Endothelial cell of umbilical vein (primary cell): ENCODE measurements at regions of chr2 and their contacts with region 1.

Region 1: GRCh38 chr2:67311536-67311935 is 85.6 kb upstream of the ETAA1 start:
- DNase-seq: peak; percentile 56
- H3K4me3 ChIP-seq: no peak overlapping the region
- H3K27ac ChIP-seq: no peak overlapping the region
- H3K4me1 ChIP-seq: no peaks in the 10 kb centered on the region
- H3K27me3 ChIP-seq: no peaks in the 10 kb centered on the region
- CTCF ChIP-seq: no peak
- POLR2A ChIP-seq: no peak

Region 2: DNA sequence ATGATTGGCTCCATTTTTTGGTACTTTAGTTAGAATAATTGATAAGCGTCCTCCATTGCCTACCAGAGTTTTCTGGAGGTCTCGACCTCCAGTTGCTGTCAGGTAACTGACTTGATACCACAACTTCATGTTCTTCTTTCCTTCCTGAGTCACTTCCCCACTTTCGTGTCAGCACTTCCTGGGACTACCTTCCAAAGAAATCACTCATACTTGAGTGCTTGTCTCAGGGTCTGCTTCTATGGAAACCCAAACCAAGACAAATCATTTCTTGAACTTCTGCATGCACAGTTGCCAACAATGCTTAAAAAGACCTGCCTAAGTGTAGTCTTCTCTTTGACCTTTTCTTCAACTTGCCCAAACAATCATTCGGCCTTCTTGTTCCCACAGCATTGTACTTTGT is 124.7 kb before region 1 on chr2:
- CTCF ChIA-PET with region 1: no interaction called
- POLR2A ChIA-PET with region 1: no interaction called
- dilution Hi-C with region 1: no loop called
- intact Hi-C with region 1: no loop called
- DNase-seq: no peak
- H3K4me3 ChIP-seq: no peak overlapping the region
- H3K27ac ChIP-seq: no peak overlapping the region
- H3K4me1 ChIP-seq: no peaks in the 10 kb centered on the region
- H3K27me3 ChIP-seq: no peaks in the 10 kb centered on the region
- CTCF ChIP-seq: no peak
- POLR2A ChIP-seq: no peak

Region 3: GRCh38 chr2:67295851-67296250 is 15.7 kb before region 1 on chr2:
- CTCF ChIA-PET with region 1: interaction called, 3 read pairs
- POLR2A ChIA-PET with region 1: no interaction called
- dilution Hi-C with region 1: no loop called
- intact Hi-C with region 1: loop called (anchors 2 kb)
- DNase-seq: no peak
- H3K4me3 ChIP-seq: no peak overlapping the region
- H3K27ac ChIP-seq: no peak overlapping the region
- H3K4me1 ChIP-seq: peaks cover 4% of the 10 kb centered on the region
- H3K27me3 ChIP-seq: no peaks in the 10 kb centered on the region
- CTCF ChIP-seq: no peak
- POLR2A ChIP-seq: no peak

Region 4: GRCh38 chr2:67374481-67374880 is 62.9 kb after region 1 on chr2:
- CTCF ChIA-PET with region 1: no interaction called
- POLR2A ChIA-PET with region 1: no interaction called
- dilution Hi-C with region 1: no loop called
- intact Hi-C with region 1: no loop called
- DNase-seq: peak; percentile 46
- H3K4me3 ChIP-seq: no peak overlapping the region
- H3K27ac ChIP-seq: no peak overlapping the region
- H3K4me1 ChIP-seq: peaks cover 2% of the 10 kb centered on the region
- H3K27me3 ChIP-seq: no peaks in the 10 kb centered on the region
- CTCF ChIP-seq: no peak
- POLR2A ChIP-seq: no peak